ENCODE measurements at regions of chr11 and their contacts with region 1.

Region 1: GRCh38 chr11:19441752-19442553 is 201.2 kb upstream of the E2F8 start:
- DNase-seq: peak; percentile 95
- ATAC-seq: peak; percentile 86
- H3K4me3 ChIP-seq: peak overlapping the region; percentile 6; the same call in 1 of the 2 replicates
- H3K27ac ChIP-seq: peak overlapping the region; percentile 88
- H3K4me1 ChIP-seq: peaks cover 45% of the 10 kb centered on the region
- H3K27me3 ChIP-seq: no peaks in the 10 kb centered on the region
- CTCF ChIP-seq: no peak

Region 2: GRCh38 chr11:19311308-19312030 is 130.5 kb before region 1 on chr11:
- CTCF ChIA-PET with region 1: no interaction called
- POLR2A ChIA-PET with region 1: no interaction called
- intact Hi-C with region 1: no loop called
- DNase-seq: peak; percentile 69
- ATAC-seq: peak; percentile 90
- H3K4me3 ChIP-seq: no peak overlapping the region
- H3K27ac ChIP-seq: no peak overlapping the region
- H3K4me1 ChIP-seq: no peaks in the 10 kb centered on the region
- H3K27me3 ChIP-seq: no peaks in the 10 kb centered on the region
- CTCF ChIP-seq: peak; percentile 82

Region 3: GRCh38 chr11:19366992-19367709 is 74.8 kb before region 1 on chr11:
- CTCF ChIA-PET with region 1: no interaction called
- POLR2A ChIA-PET with region 1: no interaction called
- intact Hi-C with region 1: loop called (anchors 5 kb)
- DNase-seq: peak; percentile 37
- ATAC-seq: peak; percentile 32
- H3K4me3 ChIP-seq: no peak overlapping the region
- H3K27ac ChIP-seq: no peak overlapping the region
- H3K4me1 ChIP-seq: peaks cover 42% of the 10 kb centered on the region
- H3K27me3 ChIP-seq: no peaks in the 10 kb centered on the region
- CTCF ChIP-seq: no peak

Region 4: GRCh38 chr11:19374151-19374569 is 67.8 kb before region 1 on chr11:
- CTCF ChIA-PET with region 1: no interaction called
- POLR2A ChIA-PET with region 1: no interaction called
- intact Hi-C with region 1: loop called (anchors 2 kb)
- DNase-seq: peak; percentile 91
- ATAC-seq: peak; percentile 99
- H3K4me3 ChIP-seq: no peak overlapping the region
- H3K27ac ChIP-seq: peak overlapping the region; percentile 62
- H3K4me1 ChIP-seq: peaks cover 36% of the 10 kb centered on the region
- H3K27me3 ChIP-seq: no peaks in the 10 kb centered on the region
- CTCF ChIP-seq: no peak

Region 5: GRCh38 chr11:19398772-19399527 is 43.0 kb before region 1 on chr11:
- CTCF ChIA-PET with region 1: interaction called, 3 read pairs
- POLR2A ChIA-PET with region 1: no interaction called
- intact Hi-C with region 1: loop called (anchors 2 kb)
- DNase-seq: peak; percentile 88
- ATAC-seq: peak; percentile 91
- H3K4me3 ChIP-seq: no peak overlapping the region; the same call in 1 of the 2 replicates
- H3K27ac ChIP-seq: peak overlapping the region; percentile 61
- H3K4me1 ChIP-seq: peaks cover 18% of the 10 kb centered on the region
- H3K27me3 ChIP-seq: no peaks in the 10 kb centered on the region
- CTCF ChIP-seq: no peak

Region 6: DNA sequence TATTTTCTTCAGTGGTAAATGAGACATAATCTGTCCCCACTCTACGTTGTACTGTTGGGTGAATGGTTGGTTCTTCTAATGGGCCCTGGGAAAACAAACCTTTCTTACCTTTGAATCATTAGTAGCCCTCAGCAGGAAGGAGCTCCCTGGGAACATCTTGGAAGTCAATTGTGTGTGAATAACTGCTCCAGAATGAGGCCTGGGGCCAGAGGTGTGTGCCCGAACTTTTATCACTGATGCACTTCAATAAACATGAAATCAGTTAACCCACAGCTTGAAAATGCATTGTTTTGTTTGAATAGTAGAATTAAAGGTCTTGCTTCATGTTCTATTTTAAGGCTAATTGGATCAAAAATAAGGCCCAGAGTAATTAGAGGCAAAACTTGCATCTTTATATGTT is 337.8 kb after region 1 on chr11:
- CTCF ChIA-PET with region 1: no interaction called
- POLR2A ChIA-PET with region 1: no interaction called
- intact Hi-C with region 1: no loop called
- DNase-seq: no peak
- ATAC-seq: no peak
- H3K4me3 ChIP-seq: no peak overlapping the region
- H3K27ac ChIP-seq: no peak overlapping the region
- H3K4me1 ChIP-seq: peaks cover 12% of the 10 kb centered on the region; the same call in 1 of the 2 replicates
- H3K27me3 ChIP-seq: no peaks in the 10 kb centered on the region
- CTCF ChIP-seq: no peak

Measured in PC-3 (cell line).